ENCODE measurements at regions of chr17 and their contacts with region 1.

Region 1: GRCh38 chr17:73255671-73256181 is 6.0 kb downstream of the CPSF4L start:
- DNase-seq: peak; percentile 18 to 76 (median 46)
- ATAC-seq: peak; percentile 73
- H3K4me3 ChIP-seq: no peak overlapping the region
- H3K4me3 Mint-ChIP-seq: no peak overlapping the region
- H3K27ac ChIP-seq: no peak overlapping the region
- H3K27ac Mint-ChIP-seq: no peak overlapping the region
- H3K4me1 ChIP-seq: peaks cover 6% of the 10 kb centered on the region
- H3K4me1 Mint-ChIP-seq: no peaks in the 10 kb centered on the region
- H3K27me3 ChIP-seq: no peaks in the 10 kb centered on the region
- H3K27me3 Mint-ChIP-seq: no peaks in the 10 kb centered on the region
- CTCF ChIP-seq: peak; percentile 100

Region 2: DNA sequence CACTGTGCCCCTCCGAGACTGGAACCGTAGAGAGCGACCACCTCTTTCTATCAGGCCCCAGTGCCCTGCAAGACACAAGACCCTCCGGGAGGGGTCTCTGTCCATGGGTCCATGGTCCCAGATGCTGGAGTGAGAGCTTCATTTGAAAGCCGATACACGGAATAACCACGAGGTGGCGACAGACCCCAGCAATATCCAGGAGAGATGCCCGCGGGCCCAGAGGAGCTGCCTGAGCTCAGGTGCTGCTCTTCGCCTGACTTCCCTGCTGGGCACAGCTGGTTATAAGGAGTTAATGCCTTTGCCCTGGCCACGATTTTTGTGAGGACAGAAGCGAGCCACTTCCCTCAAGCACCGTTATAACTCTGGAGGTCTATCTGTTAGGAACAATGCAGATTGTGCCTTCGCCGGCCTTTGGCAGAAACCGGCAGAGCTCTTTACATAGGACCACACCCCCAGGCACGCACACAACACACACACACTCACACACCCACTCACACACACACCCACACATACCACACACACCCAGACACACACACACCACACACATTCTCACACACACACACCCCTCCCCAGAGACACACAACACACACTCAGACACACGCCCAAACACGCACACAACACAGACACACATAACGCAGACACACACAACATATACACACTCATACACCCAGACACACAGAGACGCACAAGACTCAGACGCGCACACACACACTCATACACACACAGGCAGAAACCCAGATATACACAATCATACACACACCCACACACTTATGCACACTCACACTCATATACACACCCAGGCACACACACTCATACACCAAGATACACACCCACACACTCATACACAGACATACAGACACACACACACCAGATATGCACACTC is 698.5 kb before region 1 on chr17:
- CTCF ChIA-PET with region 1: no interaction called
- POLR2A ChIA-PET with region 1: no interaction called
- intact Hi-C with region 1: loop called in 1 of 2 experiments (anchors 5 kb)
- DNase-seq: peak; percentile 30 to 71 (median 44)
- ATAC-seq: peak; percentile 39
- H3K4me3 ChIP-seq: no peak overlapping the region
- H3K4me3 Mint-ChIP-seq: no peak overlapping the region
- H3K27ac ChIP-seq: no peak overlapping the region
- H3K27ac Mint-ChIP-seq: no peak overlapping the region
- H3K4me1 ChIP-seq: peaks cover 3% of the 10 kb centered on the region
- H3K4me1 Mint-ChIP-seq: no peaks in the 10 kb centered on the region
- H3K27me3 ChIP-seq: no peaks in the 10 kb centered on the region
- H3K27me3 Mint-ChIP-seq: no peaks in the 10 kb centered on the region
- CTCF ChIP-seq: peak; percentile 76

Region 3: DNA sequence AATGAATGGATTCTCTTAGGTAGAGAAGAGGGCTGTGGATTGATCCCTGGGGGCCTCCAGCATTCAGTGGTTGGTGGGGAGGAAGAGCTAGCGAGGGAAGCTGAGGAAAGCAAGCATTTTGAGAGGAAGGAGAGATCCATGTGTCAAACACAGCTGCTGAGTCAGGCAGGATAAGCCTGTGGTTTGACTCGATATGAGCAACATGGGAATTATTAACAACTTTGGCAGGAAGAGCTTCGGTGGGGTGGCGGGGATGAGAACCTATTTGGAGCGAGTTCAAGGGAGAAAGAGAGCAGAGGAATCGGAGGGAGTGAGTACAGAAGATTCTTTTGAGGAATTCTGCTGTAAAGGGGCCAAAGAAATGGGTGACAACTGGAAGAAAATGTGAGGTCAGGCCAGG is 115.6 kb after region 1 on chr17:
- CTCF ChIA-PET with region 1: interaction called, 13 read pairs
- POLR2A ChIA-PET with region 1: no interaction called
- intact Hi-C with region 1: loop called (anchors 1 kb)
- DNase-seq: no peak
- ATAC-seq: no peak
- H3K4me3 ChIP-seq: no peak overlapping the region
- H3K4me3 Mint-ChIP-seq: no peak overlapping the region
- H3K27ac ChIP-seq: no peak overlapping the region
- H3K27ac Mint-ChIP-seq: no peak overlapping the region
- H3K4me1 ChIP-seq: no peaks in the 10 kb centered on the region
- H3K4me1 Mint-ChIP-seq: no peaks in the 10 kb centered on the region
- H3K27me3 ChIP-seq: no peaks in the 10 kb centered on the region
- H3K27me3 Mint-ChIP-seq: no peaks in the 10 kb centered on the region
- CTCF ChIP-seq: no peak

Region 4: GRCh38 chr17:73710095-73710592 is 454.4 kb after region 1 on chr17:
- CTCF ChIA-PET with region 1: no interaction called
- POLR2A ChIA-PET with region 1: no interaction called
- intact Hi-C with region 1: loop called in 1 of 2 experiments (anchors 10 kb)
- DNase-seq: peak; percentile 38 to 84 (median 60)
- ATAC-seq: peak; percentile 79
- H3K4me3 ChIP-seq: no peak overlapping the region
- H3K4me3 Mint-ChIP-seq: no peak overlapping the region
- H3K27ac ChIP-seq: no peak overlapping the region
- H3K27ac Mint-ChIP-seq: peak overlapping the region; percentile 4
- H3K4me1 ChIP-seq: peaks cover 15% of the 10 kb centered on the region
- H3K4me1 Mint-ChIP-seq: peaks cover 17% of the 10 kb centered on the region
- H3K27me3 ChIP-seq: no peaks in the 10 kb centered on the region
- H3K27me3 Mint-ChIP-seq: no peaks in the 10 kb centered on the region
- CTCF ChIP-seq: peak; percentile 91

Region 5: GRCh38 chr17:73956669-73957465 is 701.1 kb after region 1 on chr17:
- CTCF ChIA-PET with region 1: no interaction called
- POLR2A ChIA-PET with region 1: no interaction called
- intact Hi-C with region 1: loop called in 1 of 2 experiments (anchors 5 kb)
- DNase-seq: peak; percentile 35 to 71 (median 54)
- ATAC-seq: peak; percentile 66
- H3K4me3 ChIP-seq: no peak overlapping the region
- H3K4me3 Mint-ChIP-seq: no peak overlapping the region
- H3K27ac ChIP-seq: no peak overlapping the region
- H3K27ac Mint-ChIP-seq: no peak overlapping the region
- H3K4me1 ChIP-seq: peaks cover 13% of the 10 kb centered on the region
- H3K4me1 Mint-ChIP-seq: peaks cover 3% of the 10 kb centered on the region
- H3K27me3 ChIP-seq: peaks cover 13 to 14% of the 10 kb centered on the region in 2 experiments
- H3K27me3 Mint-ChIP-seq: peaks cover 4% of the 10 kb centered on the region
- CTCF ChIP-seq: peak; percentile 63

Region 6: GRCh38 chr17:74176546-74177001 is 920.8 kb after region 1 on chr17:
- CTCF ChIA-PET with region 1: no interaction called
- POLR2A ChIA-PET with region 1: no interaction called
- intact Hi-C with region 1: loop called in 1 of 2 experiments (anchors 5 kb)
- DNase-seq: peak in 10 of 14 experiments; percentile 8 to 54 (median 32)
- ATAC-seq: peak; percentile 70
- H3K4me3 ChIP-seq: no peak overlapping the region
- H3K4me3 Mint-ChIP-seq: no peak overlapping the region
- H3K27ac ChIP-seq: no peak overlapping the region
- H3K27ac Mint-ChIP-seq: no peak overlapping the region
- H3K4me1 ChIP-seq: no peaks in the 10 kb centered on the region
- H3K4me1 Mint-ChIP-seq: no peaks in the 10 kb centered on the region
- H3K27me3 ChIP-seq: peaks cover 8 to 20% of the 10 kb centered on the region in 2 experiments
- H3K27me3 Mint-ChIP-seq: peaks cover 55% of the 10 kb centered on the region
- CTCF ChIP-seq: peak; percentile 52